ENCODE measurements at regions of chr5 and their contacts with region 1.

Region 1: DNA sequence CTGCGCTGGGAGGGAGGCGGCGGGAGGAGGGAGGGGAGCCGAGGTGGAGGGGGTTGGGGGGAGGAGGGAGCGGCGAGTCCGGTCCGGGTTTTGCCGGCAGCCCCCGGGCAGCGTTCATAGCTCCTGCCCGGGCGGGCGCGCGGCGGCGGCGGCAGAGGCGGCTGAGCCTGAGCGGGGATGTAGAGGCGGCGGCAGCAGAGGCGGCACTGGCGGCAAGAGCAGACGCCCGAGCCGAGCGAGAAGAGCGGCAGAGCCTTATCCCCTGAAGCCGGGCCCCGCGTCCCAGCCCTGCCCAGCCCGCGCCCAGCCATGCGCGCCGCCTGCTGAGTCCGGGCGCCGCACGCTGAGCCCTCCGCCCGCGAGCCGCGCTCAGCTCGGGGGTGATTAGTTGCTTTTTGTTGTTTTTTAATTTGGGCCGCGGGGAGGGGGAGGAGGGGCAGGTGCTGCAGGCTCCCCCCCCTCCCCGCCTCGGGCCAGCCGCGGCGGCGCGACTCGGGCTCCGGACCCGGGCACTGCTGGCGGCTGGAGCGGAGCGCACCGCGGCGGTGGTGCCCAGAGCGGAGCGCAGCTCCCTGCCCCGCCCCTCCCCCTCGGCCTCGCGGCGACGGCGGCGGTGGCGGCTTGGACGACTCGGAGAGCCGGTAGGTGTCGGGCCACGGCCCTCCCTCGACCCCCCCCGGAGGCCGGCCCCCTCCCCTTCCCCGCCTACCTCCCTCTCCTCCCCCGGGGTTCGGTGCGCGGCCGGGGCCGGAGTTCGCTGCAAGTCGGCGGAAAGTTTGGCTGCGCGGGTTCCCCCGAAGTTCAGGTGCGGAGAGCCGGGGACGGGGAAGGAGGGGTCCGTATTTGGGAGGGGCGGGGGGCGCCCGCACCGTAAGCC is at the start of gene CXXC5:
- DNase-seq: peak; percentile 84
- H3K4me3 Mint-ChIP-seq: peak within 1 kb of the TSS; percentile 82
- H3K27ac Mint-ChIP-seq: no peak within 1 kb of the TSS
- H3K4me1 Mint-ChIP-seq: peaks cover 33% of the 10 kb centered on the region
- H3K27me3 Mint-ChIP-seq: peaks cover 59% of the 10 kb centered on the region
- total RNA-seq, gene CXXC5: 1.2 and 1.9 TPM in 2 replicates

Region 2: DNA sequence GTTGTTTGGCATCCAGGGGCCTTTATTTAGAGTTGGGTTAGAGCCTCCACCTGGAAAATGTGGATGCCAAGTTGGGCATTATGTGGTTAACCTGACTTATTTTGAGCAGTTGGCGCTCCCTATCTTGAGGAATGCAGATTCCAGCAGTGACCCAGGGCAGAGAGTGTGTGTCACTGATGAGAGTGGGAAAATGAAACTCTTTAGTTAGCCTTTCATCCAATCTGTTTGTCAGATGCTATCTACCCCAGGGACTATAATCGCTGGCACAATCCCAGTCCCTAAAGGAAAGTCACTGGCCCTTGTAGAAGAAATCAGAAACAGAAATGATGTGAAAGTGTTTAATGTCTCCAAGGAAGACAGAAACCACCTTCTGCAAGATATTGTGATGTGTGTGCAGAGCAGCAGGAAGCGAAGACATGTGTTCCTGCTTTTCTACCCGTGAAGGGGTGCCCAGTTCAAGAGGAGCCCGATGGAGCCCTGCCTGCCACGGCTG is 155.7 kb before region 1 on chr5:
- intact Hi-C with region 1: no loop called
- DNase-seq: peak; percentile 65
- H3K4me3 Mint-ChIP-seq: peak overlapping the region; percentile 35
- H3K27ac Mint-ChIP-seq: peak overlapping the region; percentile 51
- H3K4me1 Mint-ChIP-seq: peaks cover 29% of the 10 kb centered on the region
- H3K27me3 Mint-ChIP-seq: no peaks in the 10 kb centered on the region

Region 3: DNA sequence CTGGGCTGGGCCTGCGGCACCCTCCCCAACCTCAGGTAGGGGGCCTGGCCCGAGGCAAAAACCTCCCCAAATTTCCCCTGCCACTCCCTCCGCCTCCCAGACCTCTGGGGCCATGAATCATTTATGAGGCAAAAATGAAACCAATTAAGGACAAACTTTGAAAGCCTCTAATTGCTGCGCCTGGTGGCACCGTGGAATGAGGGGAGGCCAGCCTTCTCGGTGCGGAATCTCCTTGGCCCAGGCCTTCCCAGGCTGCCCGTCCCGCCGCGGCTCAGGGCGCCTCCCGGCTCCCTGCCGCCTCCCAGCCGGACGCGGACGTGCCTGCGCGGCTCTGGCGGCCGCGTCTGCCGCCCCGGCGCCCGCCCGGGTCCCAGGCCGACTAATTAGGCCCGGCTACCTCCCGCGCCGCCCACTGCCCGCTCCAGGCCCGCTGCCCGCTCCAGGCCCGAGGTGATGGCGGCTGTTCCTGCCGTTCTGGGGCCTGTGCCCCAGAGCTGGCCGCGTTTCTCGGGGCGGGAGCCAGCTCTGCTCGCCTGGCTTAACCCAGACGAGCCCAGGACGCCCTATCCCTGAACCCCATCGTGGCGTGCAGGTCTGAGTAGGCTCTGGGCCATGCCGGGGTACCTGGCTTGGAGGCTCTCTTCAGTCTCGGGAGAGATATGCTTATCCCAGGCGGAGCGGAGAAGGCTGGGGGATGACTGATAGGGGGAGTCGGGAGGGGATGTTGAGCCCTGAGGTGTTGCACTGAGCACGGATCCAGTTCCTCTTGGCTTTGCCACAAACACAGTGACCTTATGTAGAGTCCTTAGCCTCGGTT is 19.8 kb after region 1 on chr5:
- intact Hi-C with region 1: loop called (anchors 2 kb)
- DNase-seq: peak; percentile 80
- H3K4me3 Mint-ChIP-seq: peak overlapping the region; percentile 73
- H3K27ac Mint-ChIP-seq: peak overlapping the region; percentile 20
- H3K4me1 Mint-ChIP-seq: peaks cover 33% of the 10 kb centered on the region
- H3K27me3 Mint-ChIP-seq: no peaks in the 10 kb centered on the region

Region 4: DNA sequence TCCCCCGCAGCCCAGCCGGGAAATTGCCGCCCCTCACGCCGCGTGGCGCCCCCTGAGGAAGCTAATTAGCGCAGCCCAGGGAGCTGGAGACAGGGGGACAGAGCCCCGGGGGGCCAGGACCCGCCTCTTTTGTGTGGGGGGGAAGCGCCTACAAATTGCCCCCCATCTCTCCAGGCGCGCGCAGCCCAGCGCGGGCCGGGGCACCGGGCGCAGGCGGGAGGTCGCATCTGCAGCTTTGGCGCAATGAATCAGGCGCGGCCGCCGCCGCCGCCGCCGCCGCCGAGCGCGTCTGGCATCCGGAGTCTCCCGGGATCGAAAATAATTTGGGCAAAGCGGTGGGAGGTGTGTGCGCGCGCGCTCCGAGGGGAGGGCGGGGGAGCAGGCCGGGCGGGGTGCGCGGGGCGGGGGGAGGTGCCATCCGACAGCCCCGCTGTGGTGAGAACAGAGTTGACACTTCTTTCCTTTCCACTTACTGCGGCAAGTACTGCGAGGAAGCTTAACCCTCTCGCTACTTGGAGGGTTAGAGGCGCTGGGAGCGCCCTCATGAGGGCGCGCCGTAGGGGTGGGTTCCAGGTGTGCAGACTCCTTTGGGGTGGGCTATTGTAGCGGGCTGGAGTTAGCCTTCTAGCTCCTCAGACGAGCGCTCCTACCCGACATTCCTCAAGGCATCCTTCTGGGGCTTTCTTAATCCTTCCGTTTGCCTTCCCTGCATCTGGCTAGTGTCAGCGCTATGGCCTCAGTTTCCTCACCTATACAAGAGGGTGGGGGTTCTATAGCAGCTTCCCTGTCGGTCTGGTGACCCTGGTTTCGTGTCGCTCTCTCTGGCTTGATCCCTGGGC is 62.8 kb after region 1 on chr5:
- intact Hi-C with region 1: loop called (anchors 2 kb)
- DNase-seq: peak; percentile 78
- H3K4me3 Mint-ChIP-seq: peak overlapping the region; percentile 73
- H3K27ac Mint-ChIP-seq: no peak overlapping the region
- H3K4me1 Mint-ChIP-seq: peaks cover 13% of the 10 kb centered on the region
- H3K27me3 Mint-ChIP-seq: peaks cover 42% of the 10 kb centered on the region

Region 5: DNA sequence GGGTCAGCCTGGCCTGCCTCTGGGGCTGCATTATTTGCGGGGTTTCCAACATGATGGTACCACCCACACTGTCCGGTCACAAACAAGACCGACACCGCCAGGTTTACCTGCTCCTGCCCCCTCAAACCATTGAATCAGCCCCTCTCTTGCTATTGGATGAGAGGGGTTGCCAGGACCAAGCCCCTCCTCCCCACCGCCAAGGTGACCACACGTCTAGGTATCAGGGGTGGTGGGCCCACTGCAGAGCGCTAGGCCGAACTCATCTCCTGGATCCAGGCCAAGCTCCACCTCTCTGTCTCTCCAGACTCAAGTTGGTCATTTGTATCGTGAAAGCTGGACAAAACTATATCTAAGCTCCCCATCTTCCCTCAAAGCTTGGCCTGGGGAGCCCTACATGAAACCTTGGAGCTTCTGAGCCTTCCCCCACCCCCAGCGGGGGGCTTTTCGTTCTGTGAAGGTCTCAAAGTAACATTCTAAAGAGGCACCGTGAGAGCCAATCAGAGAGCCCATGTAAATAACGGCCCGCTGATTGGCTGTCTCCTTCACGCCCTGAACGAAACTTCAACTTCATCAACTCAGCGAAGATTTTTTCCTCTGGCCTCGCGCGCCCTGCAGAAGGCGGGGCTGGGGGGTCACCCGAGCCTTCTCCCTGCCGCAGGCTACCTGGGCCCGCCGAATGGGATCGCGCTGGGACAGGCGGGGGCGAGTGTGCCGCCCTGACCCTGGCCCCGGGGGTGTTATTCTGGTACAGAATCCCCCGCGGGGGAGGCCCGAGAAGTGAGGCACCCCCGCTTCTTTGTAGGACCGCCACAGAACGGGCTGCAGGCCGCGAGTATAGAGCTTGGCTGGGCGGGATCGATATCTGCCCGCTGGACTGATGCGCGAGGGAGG is 97.6 kb after region 1 on chr5:
- intact Hi-C with region 1: loop called (anchors 1 kb)
- DNase-seq: peak; percentile 76
- H3K4me3 Mint-ChIP-seq: peak overlapping the region; percentile 82
- H3K27ac Mint-ChIP-seq: no peak overlapping the region
- H3K4me1 Mint-ChIP-seq: peaks cover 29% of the 10 kb centered on the region
- H3K27me3 Mint-ChIP-seq: peaks cover 39% of the 10 kb centered on the region